AG04450 (cell line): ENCODE measurements at regions of chr3 and their contacts with region 1.

Region 1: DNA sequence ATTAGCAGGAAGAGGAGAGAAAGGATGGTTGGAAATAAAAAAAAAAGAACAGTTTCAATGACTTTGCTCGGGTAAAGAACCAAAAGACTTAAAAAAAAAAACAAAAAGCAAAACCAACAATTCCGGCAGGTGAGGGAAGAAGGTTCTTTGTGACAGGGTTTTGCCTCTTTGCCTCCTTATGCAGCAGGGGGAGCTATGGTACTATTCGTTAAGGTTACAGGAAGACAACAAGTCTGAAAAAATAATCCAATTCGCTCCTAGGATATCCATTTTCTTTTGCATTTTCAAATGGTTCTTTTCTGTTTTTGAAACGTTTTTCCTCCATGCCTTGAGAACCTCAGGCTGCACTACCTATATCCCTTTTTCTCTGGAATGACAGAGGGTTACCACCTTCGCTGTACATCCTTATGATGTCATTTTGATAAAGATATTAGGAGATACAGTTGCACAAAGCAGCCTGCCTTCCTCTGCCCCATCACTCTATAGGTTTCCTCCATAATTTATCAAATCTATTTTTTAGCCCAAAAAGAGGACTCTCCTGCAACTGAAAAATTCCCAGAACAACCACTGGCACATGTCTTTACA is 55.0 kb downstream of the CFAP20DC start:
- DNase-seq: peak; percentile 38
- H3K4me3 ChIP-seq: no peak overlapping the region
- H3K27ac ChIP-seq: no peak overlapping the region
- H3K27me3 ChIP-seq: no peaks in the 10 kb centered on the region
- CTCF ChIP-seq: peak; percentile 92

Region 2: GRCh38 chr3:59006634-59007517 is 12.0 kb after region 1 on chr3:
- CTCF ChIA-PET with region 1: interaction called, 27 read pairs
- POLR2A ChIA-PET with region 1: no interaction called
- DNase-seq: peak; percentile 47
- H3K4me3 ChIP-seq: no peak overlapping the region
- H3K27ac ChIP-seq: peak overlapping the region; percentile 4
- H3K27me3 ChIP-seq: no peaks in the 10 kb centered on the region
- CTCF ChIP-seq: no peak